ENCODE measurements at regions of chr3 and their contacts with region 1.

Region 1: GRCh38 chr3:136861890-136862616 is at the start of gene NCK1:
- DNase-seq: peak; percentile 99
- ATAC-seq: peak; percentile 97 to 99 (median 98)
- H3K4me3 ChIP-seq: peak within 1 kb of the TSS; percentile 92
- H3K27ac ChIP-seq: peak within 1 kb of the TSS; percentile 97
- H3K4me1 ChIP-seq: peaks cover 16% of the 10 kb centered on the region
- H3K27me3 ChIP-seq: no peaks in the 10 kb centered on the region
- CTCF ChIP-seq: peak; percentile 6
- total RNA-seq, gene NCK1: 25.4 to 33.4 (median 30.7) TPM

Region 2: GRCh38 chr3:136802481-136802996 is 59.5 kb before region 1 on chr3:
- intact Hi-C with region 1: loop called in 1 of 2 experiments (anchors 10 kb)
- DNase-seq: no peak
- ATAC-seq: peak in 3 of 4 donors; percentile 68 to 78 (median 70)
- H3K4me3 ChIP-seq: no peak overlapping the region
- H3K27ac ChIP-seq: peak overlapping the region; percentile 48
- H3K4me1 ChIP-seq: peaks cover 10% of the 10 kb centered on the region
- H3K27me3 ChIP-seq: no peaks in the 10 kb centered on the region
- CTCF ChIP-seq: no peak

Region 3: DNA sequence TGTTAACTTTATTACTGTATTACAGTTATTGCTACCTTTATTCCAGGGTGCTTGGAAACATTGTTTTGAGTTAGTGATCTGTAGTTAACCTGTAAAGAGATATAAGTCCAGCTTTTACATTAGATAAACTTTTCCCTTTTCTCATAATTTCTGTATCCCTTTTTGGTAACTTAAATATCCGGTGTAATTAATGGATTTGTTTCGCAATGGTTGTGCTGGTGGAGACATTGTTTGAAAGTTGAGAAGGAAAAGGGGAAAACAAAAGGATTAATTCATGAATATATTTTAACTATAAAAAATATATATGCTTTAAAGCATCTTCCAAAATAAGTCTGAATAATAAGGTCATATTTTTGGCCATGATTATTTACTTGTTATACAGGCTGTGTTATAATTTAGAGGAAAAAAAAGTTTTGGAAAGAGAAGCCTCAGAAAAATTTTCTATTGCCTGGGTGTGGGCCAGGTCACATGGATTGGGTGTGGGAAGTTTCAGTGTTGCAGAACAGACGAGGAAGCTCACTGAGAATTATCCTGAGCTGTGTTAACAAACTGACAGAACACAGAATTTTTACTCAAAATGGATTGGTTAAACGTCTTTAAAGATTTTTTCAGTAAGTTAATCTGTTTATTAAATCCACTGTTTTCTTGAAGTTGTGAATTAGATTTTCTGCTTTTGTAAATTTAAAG is 68.1 kb after region 1 on chr3:
- intact Hi-C with region 1: loop called in 1 of 2 experiments (anchors 10 kb)
- DNase-seq: peak; percentile 44 to 63
- ATAC-seq: peak in 2 of 4 donors; percentile 59 to 76
- H3K4me3 ChIP-seq: peak overlapping the region; percentile 47
- H3K27ac ChIP-seq: no peak overlapping the region
- H3K4me1 ChIP-seq: peaks cover 21% of the 10 kb centered on the region
- H3K27me3 ChIP-seq: no peaks in the 10 kb centered on the region
- CTCF ChIP-seq: no peak

Region 4: GRCh38 chr3:136994772-136995516 is 132.9 kb after region 1 on chr3:
- intact Hi-C with region 1: loop called in 1 of 2 experiments (anchors 10 kb)
- DNase-seq: peak; percentile 81 to 90
- ATAC-seq: peak; percentile 69 to 97 (median 80)
- H3K4me3 ChIP-seq: no peak overlapping the region
- H3K27ac ChIP-seq: peak overlapping the region; percentile 68
- H3K4me1 ChIP-seq: peaks cover 19% of the 10 kb centered on the region
- H3K27me3 ChIP-seq: no peaks in the 10 kb centered on the region
- CTCF ChIP-seq: no peak

Measured in psoas muscle (tissue), 8 donors.